AG04450 (cell line): ENCODE measurements at regions of chr11 and their contacts with region 1.

Region 1: DNA sequence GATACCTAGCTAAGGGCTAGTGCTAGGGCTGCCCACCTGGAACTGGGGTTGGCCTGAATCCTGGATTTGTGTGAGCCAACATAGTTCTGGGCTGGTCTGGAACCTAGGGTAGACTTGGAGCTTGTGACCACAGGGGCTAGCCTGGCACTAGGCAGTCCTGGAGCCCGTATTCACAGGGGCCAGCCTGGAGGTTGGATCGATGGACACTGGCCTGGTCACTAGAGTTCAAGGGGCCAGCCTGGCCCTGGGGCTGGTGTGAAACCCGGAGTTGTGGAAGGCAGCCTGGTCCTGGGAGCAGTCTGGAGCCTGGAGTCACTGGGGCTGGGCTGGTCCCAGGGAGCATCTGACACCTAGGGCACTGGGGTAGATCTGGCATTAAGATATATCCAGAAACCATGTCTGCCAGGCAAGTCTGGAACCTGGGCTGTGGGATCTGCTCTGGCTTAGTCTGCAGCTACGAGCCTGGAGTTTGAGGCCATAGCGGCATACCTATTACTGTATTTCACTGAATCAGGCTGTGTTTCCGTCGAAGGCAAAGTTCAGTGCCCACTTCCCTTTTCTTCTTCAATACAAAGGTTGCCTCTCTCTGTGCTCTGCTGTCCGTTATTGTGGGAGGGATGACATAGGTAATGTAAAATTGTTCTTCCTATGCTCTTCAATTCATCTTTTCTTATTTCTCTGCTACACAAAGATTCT is 9.1 kb upstream of the GLYATL1B start:
- DNase-seq: no peak
- H3K4me3 ChIP-seq: no peak overlapping the region
- H3K27ac ChIP-seq: no peak overlapping the region
- H3K27me3 ChIP-seq: no peaks in the 10 kb centered on the region
- CTCF ChIP-seq: no peak

Region 2: GRCh38 chr11:59053387-59053786 is 23.6 kb before region 1 on chr11:
- CTCF ChIA-PET with region 1: interaction called, 10 read pairs
- POLR2A ChIA-PET with region 1: no interaction called
- DNase-seq: peak; percentile 37
- H3K4me3 ChIP-seq: no peak overlapping the region
- H3K27ac ChIP-seq: no peak overlapping the region
- H3K27me3 ChIP-seq: peaks cover 2% of the 10 kb centered on the region
- CTCF ChIP-seq: peak; percentile 77